Activated CD4-positive, alpha-beta memory T cell treated with anti-CD3 and anti-CD28 coated beads for 36 hours (primary cell): ENCODE measurements at regions of chr1 and their contacts with region 1.

Region 1: GRCh38 chr1:31296486-31297276 is at the starts of genes SNRNP40 and ZCCHC17:
- DNase-seq: peak; percentile 95
- H3K4me3 Mint-ChIP-seq: no peak within 1 kb of the TSS
- H3K27ac Mint-ChIP-seq: no peak within 1 kb of the TSS
- H3K4me1 Mint-ChIP-seq: peaks cover 32% of the 10 kb centered on the region
- H3K27me3 Mint-ChIP-seq: no peaks in the 10 kb centered on the region
- total RNA-seq, gene SNRNP40: 83.7 to 96.4 TPM
- total RNA-seq, gene ZCCHC17: 24.4 to 29.6 TPM

Region 2: DNA sequence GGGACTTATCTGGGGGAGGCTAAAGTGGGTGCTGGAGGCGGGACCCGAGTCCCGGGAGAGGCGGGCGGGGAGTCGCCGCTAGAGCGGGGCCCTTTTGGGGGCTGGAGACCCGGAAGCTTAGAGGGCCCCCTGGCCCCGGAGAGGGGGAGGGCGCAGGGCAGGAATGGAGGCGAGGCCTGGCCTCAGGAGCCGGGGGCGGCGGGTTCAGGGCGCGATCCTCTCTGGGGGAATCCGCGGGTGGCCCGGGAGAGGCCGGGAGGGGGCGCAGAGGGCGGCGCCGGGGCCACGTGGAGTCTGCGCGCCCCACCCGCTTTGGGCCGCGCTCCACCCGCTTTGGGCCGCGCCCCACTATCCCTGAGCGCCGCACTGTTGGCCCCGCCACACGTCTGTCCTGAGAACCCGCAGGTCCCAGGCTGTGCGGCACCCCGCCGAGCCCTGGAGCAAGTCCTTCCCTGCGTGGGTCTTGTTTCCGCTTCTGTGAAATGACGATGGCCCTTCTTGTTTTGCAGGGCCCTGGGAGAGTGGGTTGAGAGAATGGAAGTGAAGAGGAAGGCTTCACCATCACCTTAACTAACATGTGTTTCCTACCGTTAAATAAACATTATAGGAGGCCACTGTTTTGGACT is 141.4 kb before region 1 on chr1:
- CTCF ChIA-PET with region 1: no interaction called
- POLR2A ChIA-PET with region 1: interaction called, 3 read pairs
- intact Hi-C with region 1: loop called (anchors 5 kb)
- DNase-seq: peak; percentile 79
- H3K4me3 Mint-ChIP-seq: peak overlapping the region; percentile 87
- H3K27ac Mint-ChIP-seq: peak overlapping the region; percentile 73
- H3K4me1 Mint-ChIP-seq: peaks cover 5% of the 10 kb centered on the region
- H3K27me3 Mint-ChIP-seq: no peaks in the 10 kb centered on the region